ENCODE measurements at regions of chr21 and their contacts with region 1.

Region 1: DNA sequence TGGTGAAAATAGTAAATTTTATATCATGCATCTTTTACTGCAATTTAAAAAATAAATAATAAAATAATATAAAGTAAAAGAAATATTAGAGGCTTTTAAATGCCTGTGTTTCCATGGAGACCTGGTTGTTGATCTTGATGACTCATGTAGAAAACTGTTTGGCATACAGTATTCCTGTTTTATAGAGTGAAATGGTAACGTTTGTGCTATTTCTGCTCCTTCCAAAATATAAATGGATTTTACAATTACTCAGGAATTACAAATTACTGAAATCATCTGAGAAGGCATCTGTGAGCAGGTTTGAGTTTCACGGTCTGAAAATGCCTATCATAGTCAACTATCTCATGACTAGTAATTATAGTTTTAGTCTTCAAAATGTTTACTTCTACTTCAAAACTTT is 98.4 kb upstream of the USP25 start:
- DNase-seq: no peak
- CTCF ChIP-seq: no peak

Region 2: DNA sequence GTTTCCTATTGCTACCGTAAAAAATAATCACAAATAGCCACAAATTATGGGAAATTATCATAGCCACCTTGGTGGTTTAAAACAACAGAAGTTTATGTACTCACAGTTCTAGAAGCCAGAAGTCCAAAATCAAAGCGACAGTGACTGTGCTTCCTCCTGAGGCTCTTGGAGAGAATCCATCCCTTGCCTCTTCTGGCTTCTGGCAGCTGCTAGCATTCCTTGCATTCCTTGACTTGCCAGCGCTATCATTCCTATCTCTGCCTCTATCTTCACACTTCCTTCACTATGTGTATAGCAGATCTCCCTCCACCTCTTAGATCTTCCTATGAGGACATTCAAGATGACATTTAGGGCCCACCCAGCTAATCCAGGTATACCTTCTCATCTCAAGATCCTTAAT is 81.7 kb before region 1 on chr21:
- in situ Hi-C with region 1: loop called (anchors 25 kb)
- DNase-seq: no peak
- CTCF ChIP-seq: no peak